HEK293T (cell line): ENCODE measurements at regions of chr1 and their contacts with region 1.

Region 1: DNA sequence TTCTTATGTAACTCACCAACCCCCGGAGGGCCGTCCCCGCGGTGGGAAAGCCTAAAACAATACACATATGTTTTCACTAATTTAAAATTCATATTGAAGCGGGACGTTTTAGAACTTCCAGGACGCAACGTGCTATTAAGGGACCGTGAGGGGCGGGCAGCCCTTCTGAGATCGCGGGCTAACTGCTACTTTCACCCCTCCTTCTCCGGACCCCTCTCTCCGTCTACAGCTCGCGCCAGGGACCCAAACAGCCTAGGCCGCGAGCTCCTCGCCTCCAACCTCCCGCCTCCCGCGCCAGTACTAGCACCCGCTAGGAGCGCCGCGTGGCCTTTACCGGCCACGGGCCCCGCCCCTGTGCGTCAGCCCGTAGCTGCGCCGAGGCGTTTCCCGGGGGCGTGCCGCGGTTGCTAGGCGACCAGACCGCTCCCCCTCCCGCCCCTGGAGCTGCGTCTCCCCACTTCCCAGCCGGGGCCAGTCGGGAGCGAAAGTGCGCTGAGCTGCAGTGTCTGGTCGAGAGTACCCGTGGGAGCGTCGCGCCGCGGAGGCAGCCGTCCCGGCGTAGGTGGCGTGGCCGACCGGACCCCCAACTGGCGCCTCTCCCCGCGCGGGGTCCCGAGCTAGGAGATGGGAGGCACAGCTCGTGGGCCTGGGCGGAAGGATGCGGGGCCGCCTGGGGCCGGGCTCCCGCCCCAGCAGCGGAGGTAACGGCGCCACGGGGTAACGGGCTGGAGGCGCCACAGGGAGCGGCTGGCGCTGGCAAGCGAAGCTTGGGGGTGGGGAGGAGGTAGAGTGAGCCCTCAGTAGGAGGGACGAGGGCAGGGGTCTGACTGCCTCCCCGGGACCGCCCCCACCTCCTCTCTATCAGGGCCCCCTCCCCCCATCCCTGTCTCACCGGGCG is at the start of gene DYRK3:
- DNase-seq: peak; percentile 96

Region 2: DNA sequence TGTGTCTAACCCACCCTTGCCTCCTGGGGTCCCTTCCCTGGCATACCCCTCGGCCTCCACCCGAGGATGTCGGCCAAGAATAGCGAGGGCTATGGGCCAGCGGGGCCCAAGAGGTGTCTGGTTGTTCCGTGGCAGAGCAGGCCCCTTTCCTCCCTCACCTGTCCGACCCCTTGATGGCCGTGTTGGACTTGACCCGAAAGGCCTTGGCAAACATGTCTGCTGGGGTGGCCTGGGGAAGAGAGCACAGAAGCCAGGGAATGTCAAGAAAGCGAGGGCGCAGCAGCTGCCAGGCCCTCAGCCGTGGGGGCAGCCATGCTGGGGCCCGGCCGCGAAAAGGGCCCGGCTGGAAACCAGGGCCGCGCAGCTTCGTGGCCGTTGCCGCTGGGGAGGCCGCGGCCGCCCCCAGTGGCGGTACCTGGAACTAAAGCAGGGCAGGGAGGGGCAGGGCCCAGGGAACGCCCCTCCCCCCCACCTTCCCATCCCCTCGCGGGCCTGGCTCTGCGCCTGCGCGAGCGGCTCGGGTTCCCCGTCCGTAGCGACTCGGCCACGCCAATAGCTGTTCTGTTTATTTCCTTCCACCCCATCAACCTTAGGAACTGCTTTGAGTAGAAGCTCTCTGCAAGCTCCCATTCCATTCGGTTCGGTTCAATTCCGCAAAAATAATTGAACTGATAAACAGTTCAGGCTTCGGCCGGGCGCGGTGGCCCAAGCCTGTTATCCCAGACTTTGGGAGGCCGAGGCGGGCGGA is 23.0 kb before region 1 on chr1 and contains the start of gene EIF2D:
- CTCF ChIA-PET with region 1: interaction called, 7 read pairs
- POLR2A ChIA-PET with region 1: interaction called, 10 read pairs
- DNase-seq: peak; percentile 100

Region 3: GRCh38 chr1:206658264-206658980 is 23.1 kb after region 1 on chr1:
- CTCF ChIA-PET with region 1: interaction called, 50 read pairs
- POLR2A ChIA-PET with region 1: interaction called, 31 read pairs
- DNase-seq: peak; percentile 92

Region 4: GRCh38 chr1:206663832-206664652 is 28.7 kb after region 1 on chr1:
- CTCF ChIA-PET with region 1: interaction called, 50 read pairs
- POLR2A ChIA-PET with region 1: interaction called, 31 read pairs
- DNase-seq: peak; percentile 82